GM12878 (cell line): ENCODE measurements at regions of chr18 and their contacts with region 1.

Region 1: GRCh38 chr18:864872-865273 is 39.8 kb upstream of the ADCYAP1 start:
- DNase-seq: no peak
- ATAC-seq: peak; percentile 92
- H3K4me3 ChIP-seq: no peak overlapping the region
- H3K27ac ChIP-seq: no peak overlapping the region
- H3K4me1 ChIP-seq: no peaks in the 10 kb centered on the region
- H3K27me3 ChIP-seq: no peaks in the 10 kb centered on the region; a peak in 2 of 4 replicates
- CTCF ChIP-seq: peak; percentile 92 to 99 (median 93)
- EP300 ChIP-seq: no peak
- POLR2A ChIP-seq: no peak
- RAD21 ChIP-seq: peak; percentile 92

Region 2: GRCh38 chr18:961644-962355 is 96.9 kb after region 1 on chr18:
- CTCF ChIA-PET with region 1: interaction called, 20 read pairs
- POLR2A ChIA-PET with region 1: no interaction called
- RAD21 ChIA-PET with region 1: interaction called, 5 read pairs
- SMC1A ChIA-PET with region 1: interaction called, 9 read pairs
- in situ Hi-C with region 1: loop called (anchors 5 kb)
- intact Hi-C with region 1: loop called (anchors 2 kb)
- DNase-seq: no peak
- ATAC-seq: no peak
- H3K4me3 ChIP-seq: no peak overlapping the region
- H3K27ac ChIP-seq: no peak overlapping the region
- H3K4me1 ChIP-seq: no peaks in the 10 kb centered on the region
- H3K27me3 ChIP-seq: no peaks in the 10 kb centered on the region
- CTCF ChIP-seq: peak; percentile 65 to 89 (median 81); a peak in 5 of 6 replicates
- EP300 ChIP-seq: no peak
- POLR2A ChIP-seq: no peak
- RAD21 ChIP-seq: peak; percentile 49

Region 3: DNA sequence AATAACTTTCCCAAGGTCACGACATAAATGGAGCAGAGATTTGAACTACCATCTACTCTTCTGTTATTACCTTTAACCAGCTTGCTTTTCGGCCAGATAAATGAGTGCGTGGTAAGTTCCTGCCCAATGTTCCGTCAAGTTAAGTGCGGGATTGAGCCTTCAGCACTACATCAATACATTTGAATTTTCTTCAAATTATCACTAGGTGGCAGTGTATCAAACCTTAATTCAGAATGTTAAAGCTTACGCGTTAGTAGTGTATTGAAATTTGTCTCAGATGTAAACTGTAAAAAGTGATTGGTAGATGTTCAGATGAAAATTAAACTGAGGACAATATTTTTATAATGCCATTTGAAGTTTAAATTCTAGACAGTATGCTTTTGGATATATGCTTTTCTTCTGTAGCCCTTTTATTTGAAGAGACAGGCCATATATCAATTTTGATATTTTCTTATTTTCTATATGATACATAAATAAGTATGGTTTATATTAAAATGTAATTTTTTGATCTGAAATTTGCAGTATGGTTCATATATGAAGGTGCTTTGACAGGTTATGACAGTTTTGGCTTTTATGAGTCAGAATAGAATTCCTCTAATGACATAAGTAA is 721.1 kb after region 1 on chr18:
- CTCF ChIA-PET with region 1: interaction called, 4 read pairs
- POLR2A ChIA-PET with region 1: no interaction called
- RAD21 ChIA-PET with region 1: no interaction called
- SMC1A ChIA-PET with region 1: no interaction called
- in situ Hi-C with region 1: no loop called
- intact Hi-C with region 1: loop called (anchors 10 kb)
- DNase-seq: peak; percentile 4
- ATAC-seq: peak; percentile 82
- H3K4me3 ChIP-seq: no peak overlapping the region
- H3K27ac ChIP-seq: no peak overlapping the region
- H3K4me1 ChIP-seq: no peaks in the 10 kb centered on the region
- H3K27me3 ChIP-seq: no peaks in the 10 kb centered on the region
- CTCF ChIP-seq: peak; percentile 35 to 52 (median 44); a peak in 5 of 6 replicates
- EP300 ChIP-seq: no peak
- POLR2A ChIP-seq: no peak
- RAD21 ChIP-seq: 0 out of 2 replicates have a peak, but pooled peaks have one; percentile 7

Region 4: GRCh38 chr18:2083691-2084090 is 1218.8 kb after region 1 on chr18:
- CTCF ChIA-PET with region 1: no interaction called
- POLR2A ChIA-PET with region 1: no interaction called
- RAD21 ChIA-PET with region 1: no interaction called
- SMC1A ChIA-PET with region 1: no interaction called
- in situ Hi-C with region 1: loop called (anchors 25 kb)
- intact Hi-C with region 1: no loop called
- DNase-seq: no peak
- ATAC-seq: peak; percentile 48
- H3K4me3 ChIP-seq: no peak overlapping the region
- H3K27ac ChIP-seq: no peak overlapping the region
- H3K4me1 ChIP-seq: no peaks in the 10 kb centered on the region
- H3K27me3 ChIP-seq: no peaks in the 10 kb centered on the region
- CTCF ChIP-seq: peak; percentile 15 to 32 (median 16); a peak in 3 of 6 replicates
- EP300 ChIP-seq: no peak
- POLR2A ChIP-seq: no peak
- RAD21 ChIP-seq: no peak

Region 5: GRCh38 chr18:2559249-2559648 is 1694.4 kb after region 1 on chr18:
- CTCF ChIA-PET with region 1: no interaction called
- POLR2A ChIA-PET with region 1: no interaction called
- RAD21 ChIA-PET with region 1: no interaction called
- SMC1A ChIA-PET with region 1: interaction called, 3 read pairs
- in situ Hi-C with region 1: loop called (anchors 10 kb)
- intact Hi-C with region 1: no loop called
- DNase-seq: no peak
- ATAC-seq: peak; percentile 51; the same call in 2 of the 3 replicates
- H3K4me3 ChIP-seq: no peak overlapping the region
- H3K27ac ChIP-seq: no peak overlapping the region
- H3K4me1 ChIP-seq: no peaks in the 10 kb centered on the region
- H3K27me3 ChIP-seq: no peaks in the 10 kb centered on the region
- CTCF ChIP-seq: no peak
- EP300 ChIP-seq: no peak
- POLR2A ChIP-seq: no peak
- RAD21 ChIP-seq: no peak